Activated CD4-positive, alpha-beta memory T cell treated with anti-CD3 and anti-CD28 coated beads, Interleukin-2, amount 10 ng/mL, durations not matched to agents 7 days and 5 days (primary cell): ENCODE measurements at regions of chr12 and their contacts with region 1.

Region 1: DNA sequence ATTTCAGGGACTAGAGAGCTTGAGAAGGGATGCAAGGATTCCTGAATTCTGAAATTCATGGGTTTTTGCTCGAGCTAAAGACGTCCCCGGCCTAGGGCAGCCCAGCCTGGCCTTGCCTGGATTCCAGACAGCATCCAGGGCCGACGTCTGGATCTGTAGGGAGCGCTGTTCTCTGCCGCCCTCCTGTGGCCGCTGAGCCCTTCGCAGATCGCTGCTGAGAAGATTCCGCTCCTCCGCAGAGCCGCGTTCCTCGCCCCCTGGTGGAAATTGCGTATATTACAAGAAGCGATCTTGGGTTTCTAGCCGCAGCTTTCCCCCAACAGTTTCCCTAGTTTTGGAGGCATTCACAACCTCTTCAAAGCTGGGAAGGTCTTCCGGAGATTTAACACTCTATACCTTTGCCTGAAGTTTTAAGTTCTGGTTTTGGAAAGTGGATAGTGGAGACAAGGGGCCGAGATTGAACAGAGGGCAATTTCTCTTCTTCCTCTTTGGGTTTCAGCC is 5.1 kb downstream of the CISTR start:
- DNase-seq: peak; percentile 88
- H3K4me3 Mint-ChIP-seq: no peak overlapping the region
- H3K27ac Mint-ChIP-seq: no peak overlapping the region
- H3K4me1 Mint-ChIP-seq: peaks cover 14% of the 10 kb centered on the region
- H3K27me3 Mint-ChIP-seq: peaks cover 38% of the 10 kb centered on the region

Region 2: DNA sequence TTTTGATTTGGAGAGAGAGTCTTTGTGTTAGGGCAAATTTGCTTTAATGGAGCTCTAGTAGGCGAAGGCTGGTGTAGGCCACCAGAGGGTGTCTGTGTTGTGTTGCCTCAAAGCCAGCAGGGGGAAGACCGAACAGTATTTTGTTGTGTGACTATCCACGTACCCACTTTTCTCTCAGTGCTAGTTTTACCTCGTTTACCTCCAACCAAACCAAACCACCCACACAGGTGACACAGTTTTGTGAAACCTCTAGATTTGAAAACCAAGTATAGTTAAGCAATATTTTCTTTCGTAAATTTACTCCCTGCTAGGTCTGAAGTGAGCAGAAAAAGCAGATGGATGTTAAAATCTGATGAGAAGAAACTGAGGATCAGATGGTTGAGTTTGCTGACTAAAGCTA is 203.1 kb before region 1 on chr12:
- CTCF ChIA-PET with region 1: interaction called, 10 read pairs
- POLR2A ChIA-PET with region 1: no interaction called
- DNase-seq: peak; percentile 51
- H3K4me3 Mint-ChIP-seq: no peak overlapping the region
- H3K27ac Mint-ChIP-seq: no peak overlapping the region
- H3K4me1 Mint-ChIP-seq: peaks cover 9% of the 10 kb centered on the region
- H3K27me3 Mint-ChIP-seq: no peaks in the 10 kb centered on the region

Region 3: GRCh38 chr12:53675651-53676453 is 70.8 kb before region 1 on chr12 and contains the start of gene ATP5MC2:
- CTCF ChIA-PET with region 1: interaction called, 25 read pairs
- POLR2A ChIA-PET with region 1: interaction called, 4 read pairs
- DNase-seq: peak; percentile 97
- H3K4me3 Mint-ChIP-seq: peak within 1 kb of the TSS; percentile 85
- H3K27ac Mint-ChIP-seq: peak within 1 kb of the TSS; percentile 91
- H3K4me1 Mint-ChIP-seq: peaks cover 40% of the 10 kb centered on the region
- H3K27me3 Mint-ChIP-seq: peaks cover 29% of the 10 kb centered on the region
- total RNA-seq, gene ATP5MC2: 341 to 347 TPM

Region 4: GRCh38 chr12:53701518-53702260 is 45.0 kb before region 1 on chr12:
- CTCF ChIA-PET with region 1: interaction called, 88 read pairs
- POLR2A ChIA-PET with region 1: interaction called, 4 read pairs
- DNase-seq: peak; percentile 76
- H3K4me3 Mint-ChIP-seq: no peak overlapping the region
- H3K27ac Mint-ChIP-seq: no peak overlapping the region
- H3K4me1 Mint-ChIP-seq: peaks cover 3% of the 10 kb centered on the region
- H3K27me3 Mint-ChIP-seq: peaks cover 88% of the 10 kb centered on the region

Region 5: GRCh38 chr12:53717319-53717718 is 29.3 kb before region 1 on chr12:
- CTCF ChIA-PET with region 1: interaction called, 13 read pairs
- POLR2A ChIA-PET with region 1: no interaction called
- DNase-seq: no peak
- H3K4me3 Mint-ChIP-seq: no peak overlapping the region
- H3K27ac Mint-ChIP-seq: no peak overlapping the region
- H3K4me1 Mint-ChIP-seq: no peaks in the 10 kb centered on the region
- H3K27me3 Mint-ChIP-seq: no peaks in the 10 kb centered on the region

Region 6: GRCh38 chr12:53727310-53728041 is 19.2 kb before region 1 on chr12 and contains the start of gene CALCOCO1:
- CTCF ChIA-PET with region 1: interaction called, 154 read pairs
- POLR2A ChIA-PET with region 1: interaction called, 4 read pairs
- DNase-seq: peak; percentile 98
- H3K4me3 Mint-ChIP-seq: peak within 1 kb of the TSS; percentile 87
- H3K27ac Mint-ChIP-seq: peak within 1 kb of the TSS; percentile 69
- H3K4me1 Mint-ChIP-seq: peaks cover 33% of the 10 kb centered on the region
- H3K27me3 Mint-ChIP-seq: no peaks in the 10 kb centered on the region
- total RNA-seq, gene CALCOCO1: 80.5 to 83.0 TPM

Region 7: GRCh38 chr12:53757095-53757770 is 10.6 kb after region 1 on chr12:
- CTCF ChIA-PET with region 1: interaction called, 76 read pairs
- POLR2A ChIA-PET with region 1: interaction called, 6 read pairs
- DNase-seq: peak; percentile 88
- H3K4me3 Mint-ChIP-seq: peak overlapping the region; percentile 49
- H3K27ac Mint-ChIP-seq: no peak overlapping the region
- H3K4me1 Mint-ChIP-seq: peaks cover 23% of the 10 kb centered on the region
- H3K27me3 Mint-ChIP-seq: peaks cover 44% of the 10 kb centered on the region

Region 8: DNA sequence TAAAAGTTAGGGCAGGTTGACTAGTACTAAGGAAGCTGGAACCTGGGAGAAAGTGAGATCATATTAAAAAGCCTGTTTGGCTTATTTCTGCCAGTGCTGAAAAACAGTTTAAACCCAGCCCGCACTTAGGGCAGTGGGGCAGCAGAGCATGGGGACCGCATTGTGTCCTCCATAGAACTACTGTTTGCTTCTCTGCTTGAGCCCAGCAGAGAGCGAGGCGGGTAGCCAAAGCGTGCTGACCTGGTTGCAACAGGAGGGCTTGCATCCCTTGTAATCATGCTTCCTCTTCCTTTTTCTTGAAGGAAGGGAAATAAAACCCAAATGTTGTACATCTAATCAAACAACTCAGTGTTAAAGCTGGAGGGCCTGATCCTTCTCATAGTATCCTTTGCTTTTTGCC is 109.5 kb after region 1 on chr12:
- CTCF ChIA-PET with region 1: no interaction called
- POLR2A ChIA-PET with region 1: no interaction called
- DNase-seq: no peak
- H3K4me3 Mint-ChIP-seq: no peak overlapping the region
- H3K27ac Mint-ChIP-seq: no peak overlapping the region
- H3K4me1 Mint-ChIP-seq: no peaks in the 10 kb centered on the region
- H3K27me3 Mint-ChIP-seq: peaks cover 20% of the 10 kb centered on the region

Region 9: GRCh38 chr12:54222609-54223008 is 476.0 kb after region 1 on chr12:
- CTCF ChIA-PET with region 1: no interaction called
- POLR2A ChIA-PET with region 1: no interaction called
- DNase-seq: no peak
- H3K4me3 Mint-ChIP-seq: no peak overlapping the region
- H3K27ac Mint-ChIP-seq: no peak overlapping the region
- H3K4me1 Mint-ChIP-seq: peaks cover 17% of the 10 kb centered on the region
- H3K27me3 Mint-ChIP-seq: peaks cover 8% of the 10 kb centered on the region